ENCODE measurements at regions of chr16 and their contacts with region 1.

Region 1: GRCh38 chr16:56681939-56682702 is at the start of gene MT1X:
- DNase-seq: peak; percentile 96
- H3K4me3 Mint-ChIP-seq: peak within 1 kb of the TSS; percentile 91
- H3K27ac Mint-ChIP-seq: peak within 1 kb of the TSS; percentile 93
- H3K4me1 Mint-ChIP-seq: peaks cover 22% of the 10 kb centered on the region
- H3K27me3 Mint-ChIP-seq: no peaks in the 10 kb centered on the region
- total RNA-seq, gene MT1X: 31.9 to 38.1 TPM

Region 2: DNA sequence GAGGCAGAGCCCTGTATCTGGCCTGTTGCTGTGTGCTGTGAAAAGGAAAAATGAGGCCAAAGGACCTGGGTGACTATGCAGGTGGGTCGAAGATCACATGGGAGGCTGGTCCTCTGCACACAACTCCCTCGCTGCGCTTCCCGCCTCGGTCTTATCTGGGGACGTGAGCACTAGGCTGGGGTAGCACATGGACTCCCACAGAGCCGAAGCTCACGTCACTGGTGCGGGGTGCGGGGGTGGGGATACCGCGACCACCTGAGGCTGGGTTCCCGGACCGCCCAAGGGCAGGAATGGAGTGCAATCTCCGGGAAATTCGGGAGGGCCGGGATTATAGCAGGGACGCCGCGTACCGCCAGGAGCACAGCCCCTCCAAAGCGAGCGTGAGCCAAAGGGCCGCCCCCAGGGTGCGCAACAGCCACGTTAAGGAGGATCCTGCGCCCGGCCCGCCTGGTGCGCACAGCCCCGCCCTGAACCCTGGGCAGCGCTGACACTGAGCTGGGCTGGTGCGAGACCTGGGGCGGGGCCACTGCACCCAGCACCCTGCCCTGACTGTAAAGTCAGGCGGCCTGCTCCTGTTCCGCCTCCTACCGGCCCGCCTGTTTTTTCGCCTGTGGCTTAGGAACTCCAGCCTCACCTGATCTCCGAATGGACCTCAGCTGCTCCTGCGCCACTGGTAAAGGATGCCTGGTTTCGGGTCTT is 38.9 kb before region 1 on chr16:
- CTCF ChIA-PET with region 1: no interaction called
- POLR2A ChIA-PET with region 1: no interaction called
- intact Hi-C with region 1: loop called (anchors 5 kb)
- DNase-seq: peak; percentile 89
- H3K4me3 Mint-ChIP-seq: peak overlapping the region; percentile 54
- H3K27ac Mint-ChIP-seq: no peak overlapping the region
- H3K4me1 Mint-ChIP-seq: peaks cover 18% of the 10 kb centered on the region
- H3K27me3 Mint-ChIP-seq: peaks cover 36% of the 10 kb centered on the region

Region 3: GRCh38 chr16:56657555-56658326 is 24.4 kb before region 1 on chr16 and contains the start of gene MT1F:
- CTCF ChIA-PET with region 1: no interaction called
- POLR2A ChIA-PET with region 1: no interaction called
- intact Hi-C with region 1: loop called (anchors 2 kb)
- DNase-seq: peak; percentile 84
- H3K4me3 Mint-ChIP-seq: peak within 1 kb of the TSS; percentile 94
- H3K27ac Mint-ChIP-seq: peak within 1 kb of the TSS; percentile 69
- H3K4me1 Mint-ChIP-seq: peaks cover 14% of the 10 kb centered on the region
- H3K27me3 Mint-ChIP-seq: peaks cover 4% of the 10 kb centered on the region
- total RNA-seq, gene MT1F: 8.5 to 9.2 TPM

Region 4: DNA sequence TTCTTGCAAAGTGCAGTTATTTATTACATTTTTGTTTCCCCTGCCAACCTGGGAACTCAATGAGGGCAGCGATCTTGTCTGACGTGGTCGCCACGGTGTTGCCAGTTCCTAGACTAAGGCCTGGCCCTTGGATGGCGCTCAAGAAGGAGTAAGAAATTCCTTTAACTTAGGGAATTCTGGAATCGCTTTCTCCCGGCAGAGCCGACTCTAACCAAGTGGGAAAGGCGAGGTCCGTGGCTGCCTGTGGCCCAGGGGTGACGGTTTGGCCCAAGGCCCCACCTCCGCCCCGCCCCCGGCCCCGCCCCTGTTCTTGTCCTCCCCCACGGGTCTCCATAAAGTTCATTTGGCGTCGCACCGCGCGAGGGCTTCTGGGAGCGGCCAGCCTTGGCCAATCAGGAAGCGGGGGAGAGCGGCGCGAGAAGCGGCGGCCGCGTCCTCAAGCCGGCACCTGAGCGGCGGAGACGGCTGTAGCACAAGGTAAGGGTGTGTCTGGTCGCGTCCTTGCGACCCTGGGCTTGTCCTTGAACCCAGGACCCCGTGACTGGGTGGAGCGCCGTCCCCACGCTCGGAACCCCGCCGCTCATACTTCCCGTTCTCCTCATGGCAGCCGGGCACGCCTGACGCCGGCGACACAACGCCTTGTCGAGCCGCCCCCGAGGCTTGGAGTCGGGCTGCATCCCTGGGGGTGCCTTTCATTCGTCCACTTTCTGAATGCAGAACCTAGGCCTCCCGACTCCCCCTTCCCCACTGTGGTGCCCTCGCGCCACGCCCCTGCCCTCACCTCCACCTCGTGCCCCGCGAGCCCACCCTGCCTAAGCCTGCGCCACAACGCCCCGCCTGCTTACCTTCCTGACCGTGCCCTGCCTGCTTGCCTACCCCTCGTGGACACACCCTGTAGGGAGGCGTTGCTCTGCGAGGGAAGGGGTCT is 47.9 kb after region 1 on chr16 and contains the start of gene NUP93:
- CTCF ChIA-PET with region 1: no interaction called
- POLR2A ChIA-PET with region 1: no interaction called
- intact Hi-C with region 1: loop called (anchors 1 kb)
- DNase-seq: peak; percentile 94
- H3K4me3 Mint-ChIP-seq: peak within 1 kb of the TSS; percentile 88
- H3K27ac Mint-ChIP-seq: peak within 1 kb of the TSS; percentile 51
- H3K4me1 Mint-ChIP-seq: peaks cover 16% of the 10 kb centered on the region
- H3K27me3 Mint-ChIP-seq: no peaks in the 10 kb centered on the region
- total RNA-seq, gene NUP93: 131 to 133 TPM